Activated naive CD4-positive, alpha-beta T cell treated with anti-CD3 and anti-CD28 coated beads for 36 hours (primary cell): ENCODE measurements at regions of chr21 and their contacts with region 1.

Region 1: GRCh38 chr21:38277501-38278131 is 20.8 kb downstream of the KCNJ15 start:
- DNase-seq: peak; percentile 63
- H3K4me3 Mint-ChIP-seq: no peak overlapping the region
- H3K27ac Mint-ChIP-seq: peak overlapping the region; percentile 13
- H3K4me1 Mint-ChIP-seq: peaks cover 17% of the 10 kb centered on the region
- H3K27me3 Mint-ChIP-seq: no peaks in the 10 kb centered on the region

Region 2: GRCh38 chr21:38188037-38188436 is 89.6 kb before region 1 on chr21:
- CTCF ChIA-PET with region 1: no interaction called
- intact Hi-C with region 1: no loop called
- DNase-seq: no peak
- H3K4me3 Mint-ChIP-seq: no peak overlapping the region
- H3K27ac Mint-ChIP-seq: no peak overlapping the region
- H3K4me1 Mint-ChIP-seq: no peaks in the 10 kb centered on the region
- H3K27me3 Mint-ChIP-seq: peaks cover 3% of the 10 kb centered on the region

Region 3: GRCh38 chr21:38297194-38297631 is 19.6 kb after region 1 on chr21:
- CTCF ChIA-PET with region 1: interaction called, 4 read pairs
- intact Hi-C with region 1: loop called (anchors 2 kb)
- DNase-seq: no peak
- H3K4me3 Mint-ChIP-seq: no peak overlapping the region
- H3K27ac Mint-ChIP-seq: no peak overlapping the region
- H3K4me1 Mint-ChIP-seq: peaks cover 74% of the 10 kb centered on the region
- H3K27me3 Mint-ChIP-seq: no peaks in the 10 kb centered on the region

Region 4: DNA sequence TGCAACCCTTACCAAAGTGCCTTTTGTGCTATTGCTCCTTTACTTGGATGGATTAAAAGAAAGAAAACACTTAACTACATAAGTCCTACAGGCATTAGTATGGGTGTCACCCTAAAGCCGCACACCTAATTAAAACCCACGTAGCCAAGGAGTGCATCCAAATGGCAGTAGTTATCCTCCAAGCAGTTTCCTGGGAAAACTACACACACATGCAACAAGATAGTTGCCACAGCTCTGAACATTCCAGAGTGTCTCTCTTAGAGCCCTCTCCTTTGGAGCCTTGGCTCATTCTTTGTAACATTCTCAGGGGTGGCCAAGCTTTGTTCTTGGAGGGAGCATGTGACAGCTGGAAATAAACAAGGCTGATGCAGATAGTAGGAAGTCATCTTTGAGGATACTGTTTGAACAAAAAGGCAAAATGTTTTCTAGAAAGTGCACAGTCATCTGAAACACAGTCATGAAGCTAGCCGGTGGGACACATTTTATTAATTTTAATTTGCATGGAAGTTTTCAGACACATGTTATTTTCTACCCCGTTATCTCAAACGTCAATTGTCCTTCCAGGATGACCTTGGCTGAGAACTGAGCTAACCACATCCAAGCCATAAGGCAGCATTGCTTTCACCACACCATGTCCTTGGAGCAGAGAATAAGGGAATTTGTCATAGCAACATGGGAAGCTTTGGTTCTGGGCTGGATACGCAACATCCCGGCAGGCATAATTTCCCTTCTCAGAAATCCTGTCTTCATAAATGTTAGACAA is 30.6 kb after region 1 on chr21:
- CTCF ChIA-PET with region 1: no interaction called
- intact Hi-C with region 1: no loop called
- DNase-seq: no peak
- H3K4me3 Mint-ChIP-seq: no peak overlapping the region
- H3K27ac Mint-ChIP-seq: no peak overlapping the region
- H3K4me1 Mint-ChIP-seq: peaks cover 23% of the 10 kb centered on the region
- H3K27me3 Mint-ChIP-seq: no peaks in the 10 kb centered on the region

Region 5: GRCh38 chr21:38323721-38324531 is 46.3 kb after region 1 on chr21:
- CTCF ChIA-PET with region 1: interaction called, 4 read pairs
- intact Hi-C with region 1: loop called (anchors 2 kb)
- DNase-seq: no peak
- H3K4me3 Mint-ChIP-seq: no peak overlapping the region
- H3K27ac Mint-ChIP-seq: peak overlapping the region; percentile 17
- H3K4me1 Mint-ChIP-seq: peaks cover 36% of the 10 kb centered on the region
- H3K27me3 Mint-ChIP-seq: no peaks in the 10 kb centered on the region